K562 (cell line): ENCODE measurements at regions of chr13 and their contacts with region 1.

Region 1: GRCh38 chr13:99269627-99270241 is 11.6 kb upstream of the GPR18 start:
- DNase-seq: peak in 2 of 4 experiments; percentile 23 to 56
- ATAC-seq: peak; percentile 86
- H3K4me3 ChIP-seq: no peak overlapping the region
- H3K27ac ChIP-seq: no peak overlapping the region
- H3K4me1 ChIP-seq: peaks cover 7 to 24% of the 10 kb centered on the region in 2 experiments; a peak in 3 of 5 replicates
- H3K27me3 ChIP-seq: no peaks in the 10 kb centered on the region
- CTCF ChIP-seq: peak; percentile 66 to 81 (median 66); a peak in 5 of 6 replicates
- EP300 ChIP-seq: no peak
- POLR2A ChIP-seq: no peak
- RAD21 ChIP-seq: peak; percentile 80 to 87

Region 2: GRCh38 chr13:98672944-98673545 is 596.7 kb before region 1 on chr13:
- CTCF ChIA-PET with region 1: no interaction called
- POLR2A ChIA-PET with region 1: no interaction called
- in situ Hi-C with region 1: no loop called
- intact Hi-C with region 1: loop called (anchors 10 kb)
- DNase-seq: peak; percentile 53 to 55 (median 54)
- ATAC-seq: peak; percentile 91
- H3K4me3 ChIP-seq: no peak overlapping the region
- H3K27ac ChIP-seq: no peak overlapping the region
- H3K4me1 ChIP-seq: no peaks in the 10 kb centered on the region
- H3K27me3 ChIP-seq: peaks cover 2 to 29% of the 10 kb centered on the region in 2 experiments; a peak in 4 of 5 replicates
- CTCF ChIP-seq: peak; percentile 58 to 80 (median 73)
- EP300 ChIP-seq: no peak
- POLR2A ChIP-seq: no peak
- RAD21 ChIP-seq: peak; percentile 63 to 78

Region 3: GRCh38 chr13:99176309-99177276 is 93.1 kb before region 1 on chr13:
- CTCF ChIA-PET with region 1: no interaction called
- POLR2A ChIA-PET with region 1: no interaction called
- in situ Hi-C with region 1: loop called (anchors 5 kb)
- intact Hi-C with region 1: loop called (anchors 1 kb)
- DNase-seq: peak; percentile 73 to 78 (median 74)
- ATAC-seq: peak; percentile 96
- H3K4me3 ChIP-seq: no peak overlapping the region
- H3K27ac ChIP-seq: no peak overlapping the region
- H3K4me1 ChIP-seq: peaks cover 0 to 4% of the 10 kb centered on the region in 2 experiments; a peak in 2 of 5 replicates
- H3K27me3 ChIP-seq: no peaks in the 10 kb centered on the region
- CTCF ChIP-seq: peak; percentile 81 to 85 (median 83)
- EP300 ChIP-seq: no peak
- POLR2A ChIP-seq: no peak
- RAD21 ChIP-seq: peak; percentile 55 to 82

Region 4: DNA sequence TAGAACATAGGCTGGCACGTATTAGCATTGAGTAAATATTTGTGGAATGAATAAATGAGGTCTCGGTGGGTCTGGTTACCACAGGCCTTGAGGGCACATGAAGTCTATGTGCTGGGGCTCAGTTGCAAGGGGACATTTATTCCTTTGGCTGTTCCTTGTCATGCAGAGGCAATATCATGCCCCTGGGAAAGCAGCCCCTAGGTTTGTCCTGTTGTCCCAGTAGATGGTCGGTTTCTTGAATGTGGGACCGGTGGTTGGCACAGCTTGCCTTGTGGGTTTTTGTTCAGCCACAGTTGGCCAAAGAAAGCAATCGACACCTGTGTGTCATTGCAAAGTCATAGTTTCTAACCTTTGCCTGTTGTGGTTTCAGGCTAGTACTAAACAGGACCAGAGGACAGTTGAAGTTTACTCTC is 62.2 kb after region 1 on chr13:
- CTCF ChIA-PET with region 1: no interaction called
- POLR2A ChIA-PET with region 1: no interaction called
- in situ Hi-C with region 1: no loop called
- intact Hi-C with region 1: loop called (anchors 5 kb)
- DNase-seq: no peak
- ATAC-seq: peak; percentile 17; the same call in 1 of the 3 replicates
- H3K4me3 ChIP-seq: no peak overlapping the region
- H3K27ac ChIP-seq: peak overlapping the region; percentile 59; the same call in 1 of the 3 replicates
- H3K4me1 ChIP-seq: peaks cover 6 to 22% of the 10 kb centered on the region in 2 experiments
- H3K27me3 ChIP-seq: no peaks in the 10 kb centered on the region
- CTCF ChIP-seq: no peak
- EP300 ChIP-seq: no peak
- POLR2A ChIP-seq: no peak
- RAD21 ChIP-seq: no peak

Region 5: DNA sequence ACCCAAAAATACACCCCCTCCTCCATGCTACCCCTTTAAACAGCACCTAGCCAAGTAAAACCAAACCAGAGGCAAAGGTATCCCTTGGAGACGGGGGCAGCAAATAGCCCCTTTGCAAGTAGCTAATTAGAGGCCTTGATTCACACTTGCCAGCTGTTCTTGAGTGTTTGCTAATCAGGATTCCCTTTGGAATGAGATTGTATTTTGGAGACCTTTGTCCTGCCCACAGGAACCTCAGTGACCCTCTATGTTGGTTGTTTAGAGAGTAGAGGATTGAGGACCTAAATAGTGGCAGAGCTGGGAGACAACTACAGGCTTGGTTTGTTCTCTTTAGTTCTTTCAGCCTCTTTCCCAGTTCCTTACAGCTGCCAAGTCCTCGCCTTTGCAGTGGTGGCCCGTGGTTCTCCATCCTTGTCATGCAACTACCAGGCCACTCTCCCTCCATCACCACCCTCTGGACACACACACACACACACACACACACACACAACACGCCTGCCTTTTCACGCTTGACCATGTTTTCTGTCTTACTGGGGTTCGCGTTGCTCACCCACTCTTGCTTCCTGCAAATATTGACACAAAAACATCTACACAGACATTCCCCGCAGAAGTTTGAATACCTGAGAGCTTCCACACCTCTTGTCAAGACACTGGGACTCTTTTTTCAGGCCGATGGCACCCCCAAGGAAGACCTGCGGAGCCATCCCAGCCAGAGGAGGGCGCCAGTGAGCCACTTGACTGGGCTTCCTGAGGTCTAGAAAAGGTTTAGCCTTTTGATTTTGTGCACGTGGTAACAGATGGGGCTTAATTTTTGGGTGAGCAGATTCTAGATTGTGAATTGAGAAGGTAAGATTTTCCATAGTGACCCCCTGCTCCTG is 117.4 kb after region 1 on chr13:
- CTCF ChIA-PET with region 1: no interaction called
- POLR2A ChIA-PET with region 1: no interaction called
- in situ Hi-C with region 1: no loop called
- intact Hi-C with region 1: loop called (anchors 2 kb)
- DNase-seq: peak; percentile 66 to 78 (median 74)
- ATAC-seq: peak; percentile 92
- H3K4me3 ChIP-seq: no peak overlapping the region
- H3K27ac ChIP-seq: no peak overlapping the region
- H3K4me1 ChIP-seq: no peaks in the 10 kb centered on the region; a peak in 1 of 5 replicates
- H3K27me3 ChIP-seq: no peaks in the 10 kb centered on the region
- CTCF ChIP-seq: peak; percentile 85 to 91 (median 88)
- EP300 ChIP-seq: no peak
- POLR2A ChIP-seq: no peak
- RAD21 ChIP-seq: peak; percentile 54 to 77